ENCODE measurements at regions of chr18 and their contacts with region 1.

Region 1: GRCh38 chr18:79246348-79247108 is 149.2 kb upstream of the NFATC1 start:
- DNase-seq: peak; percentile 90
- H3K4me3 Mint-ChIP-seq: peak overlapping the region; percentile 37
- H3K27ac Mint-ChIP-seq: peak overlapping the region; percentile 60
- H3K4me1 Mint-ChIP-seq: peaks cover 7% of the 10 kb centered on the region
- H3K27me3 Mint-ChIP-seq: peaks cover 2% of the 10 kb centered on the region

Region 2: GRCh38 chr18:78875268-78875997 is 371.1 kb before region 1 on chr18:
- intact Hi-C with region 1: loop called (anchors 1 kb)
- DNase-seq: peak; percentile 78
- H3K4me3 Mint-ChIP-seq: no peak overlapping the region
- H3K27ac Mint-ChIP-seq: no peak overlapping the region
- H3K4me1 Mint-ChIP-seq: no peaks in the 10 kb centered on the region
- H3K27me3 Mint-ChIP-seq: no peaks in the 10 kb centered on the region

Region 3: GRCh38 chr18:78984941-78985784 is 261.4 kb before region 1 on chr18:
- intact Hi-C with region 1: loop called (anchors 1 kb)
- DNase-seq: peak; percentile 71
- H3K4me3 Mint-ChIP-seq: no peak overlapping the region
- H3K27ac Mint-ChIP-seq: no peak overlapping the region
- H3K4me1 Mint-ChIP-seq: peaks cover 6% of the 10 kb centered on the region
- H3K27me3 Mint-ChIP-seq: peaks cover 67% of the 10 kb centered on the region

Measured in activated CD4-positive, alpha-beta T cell treated with anti-CD3 and anti-CD28 coated beads, Interleukin-2, amount 10 ng/mL, durations not matched to agents 24 days and 14 days (primary cell).